B cell (primary cell): ENCODE measurements at regions of chr10 and their contacts with region 1.

Region 1: DNA sequence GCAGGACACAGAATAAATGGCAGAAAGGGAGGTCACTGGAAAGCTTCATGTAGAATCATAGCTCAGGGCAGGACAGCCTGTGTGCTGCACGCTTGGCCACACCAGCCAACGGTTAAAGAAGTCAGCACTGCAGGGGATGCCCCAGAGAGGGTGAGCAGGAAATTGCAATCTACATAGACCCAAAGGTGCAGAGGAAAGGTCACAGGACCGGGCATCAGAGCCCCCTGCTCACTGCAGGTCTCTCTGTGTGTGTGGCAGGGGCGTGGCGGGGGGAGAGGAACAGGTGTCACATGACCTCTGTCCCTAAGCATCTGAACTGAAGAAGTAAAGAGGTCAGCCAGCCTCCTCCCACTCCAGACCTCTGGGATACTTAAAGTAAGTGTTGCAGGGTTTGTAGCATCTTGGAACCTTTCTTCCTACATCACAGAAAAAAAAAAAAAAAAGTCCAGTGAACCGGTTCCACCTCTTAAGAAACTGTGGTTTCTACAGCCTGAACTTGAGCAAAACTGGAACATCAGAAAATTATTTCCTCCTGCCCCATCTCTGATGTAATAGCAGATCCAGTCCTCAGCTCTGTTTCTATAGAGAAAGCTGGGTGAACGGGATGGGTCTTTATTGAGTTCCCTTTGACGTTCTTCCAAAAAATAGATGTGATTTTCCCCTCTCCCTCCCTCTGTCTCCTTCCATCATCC is 64.3 kb downstream of the RGS10 start:
- DNase-seq: peak; percentile 77
- ATAC-seq: peak; percentile 95
- H3K4me3 ChIP-seq: peak overlapping the region in 2 of 5 experiments; percentile 5 to 42
- H3K4me3 Mint-ChIP-seq: peak overlapping the region; percentile 87
- H3K27ac ChIP-seq: peak overlapping the region; percentile 47 to 62
- H3K27ac Mint-ChIP-seq: peak overlapping the region; percentile 81
- H3K4me1 ChIP-seq: peaks cover 27 to 31% of the 10 kb centered on the region in 2 donors
- H3K4me1 Mint-ChIP-seq: peaks cover 37% of the 10 kb centered on the region
- H3K27me3 ChIP-seq: no peaks in the 10 kb centered on the region
- H3K27me3 Mint-ChIP-seq: no peaks in the 10 kb centered on the region
- CTCF ChIP-seq: no peak

Region 2: DNA sequence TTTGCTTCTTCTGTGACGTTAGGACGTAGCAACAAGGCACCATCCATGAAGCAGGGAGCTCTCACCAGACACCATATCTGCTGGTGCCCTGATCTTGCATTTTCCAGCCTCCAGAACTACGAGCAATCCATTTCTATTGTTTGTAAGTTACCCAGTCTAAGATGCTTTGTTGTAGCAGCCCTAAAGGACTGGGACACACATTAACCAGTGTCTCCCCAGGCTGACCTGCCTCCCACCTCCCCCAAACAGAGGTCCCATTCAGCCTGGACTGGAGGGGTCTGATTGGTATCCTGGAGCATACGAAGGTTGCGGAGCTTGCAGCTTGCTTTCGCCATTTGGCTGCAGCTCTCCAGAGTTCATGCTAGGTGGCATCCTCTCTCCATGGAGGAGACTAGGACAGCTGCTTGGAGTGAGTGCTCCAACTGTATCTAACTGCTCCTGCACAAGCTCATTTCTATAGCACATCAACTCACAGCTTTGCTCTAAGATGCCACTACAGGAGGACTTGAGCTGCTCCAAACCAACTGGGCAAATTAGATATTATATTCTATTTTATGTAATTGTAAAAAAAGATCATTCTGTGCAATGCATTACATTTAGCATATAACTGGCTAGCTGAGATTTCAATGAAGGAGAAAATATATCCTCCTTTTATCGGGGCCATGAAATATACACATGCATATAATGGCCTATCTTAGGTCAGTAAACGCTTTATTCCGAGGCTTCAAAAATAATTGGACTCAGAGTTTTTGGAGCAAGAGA is 278.8 kb before region 1 on chr10:
- CTCF ChIA-PET with region 1: interaction called, 10 read pairs
- POLR2A ChIA-PET with region 1: no interaction called
- intact Hi-C with region 1: no loop called
- DNase-seq: peak; percentile 68
- ATAC-seq: peak; percentile 84
- H3K4me3 ChIP-seq: no peak overlapping the region
- H3K4me3 Mint-ChIP-seq: no peak overlapping the region
- H3K27ac ChIP-seq: no peak overlapping the region
- H3K27ac Mint-ChIP-seq: no peak overlapping the region
- H3K4me1 ChIP-seq: peaks cover 0 to 3% of the 10 kb centered on the region in 2 donors
- H3K4me1 Mint-ChIP-seq: peaks cover 4% of the 10 kb centered on the region
- H3K27me3 ChIP-seq: peaks cover 0 to 8% (median 6%) of the 10 kb centered on the region in 4 experiments
- H3K27me3 Mint-ChIP-seq: peaks cover 9% of the 10 kb centered on the region
- CTCF ChIP-seq: peak; percentile 52

Region 3: GRCh38 chr10:119416855-119417254 is 61.4 kb before region 1 on chr10:
- CTCF ChIA-PET with region 1: no interaction called
- POLR2A ChIA-PET with region 1: no interaction called
- intact Hi-C with region 1: no loop called
- DNase-seq: peak; percentile 83
- ATAC-seq: peak; percentile 90
- H3K4me3 ChIP-seq: no peak overlapping the region
- H3K4me3 Mint-ChIP-seq: no peak overlapping the region
- H3K27ac ChIP-seq: no peak overlapping the region
- H3K27ac Mint-ChIP-seq: peak overlapping the region; percentile 62
- H3K4me1 ChIP-seq: peaks cover 0 to 8% of the 10 kb centered on the region in 2 donors
- H3K4me1 Mint-ChIP-seq: peaks cover 6% of the 10 kb centered on the region
- H3K27me3 ChIP-seq: no peaks in the 10 kb centered on the region
- H3K27me3 Mint-ChIP-seq: no peaks in the 10 kb centered on the region
- CTCF ChIP-seq: peak; percentile 88

Region 4: GRCh38 chr10:119461380-119461779 is 16.9 kb before region 1 on chr10:
- CTCF ChIA-PET with region 1: interaction called, 4 read pairs
- POLR2A ChIA-PET with region 1: interaction called, 9 read pairs
- intact Hi-C with region 1: loop called (anchors 2 kb)
- DNase-seq: no peak
- ATAC-seq: peak; percentile 63
- H3K4me3 ChIP-seq: no peak overlapping the region
- H3K4me3 Mint-ChIP-seq: no peak overlapping the region
- H3K27ac ChIP-seq: no peak overlapping the region
- H3K27ac Mint-ChIP-seq: peak overlapping the region; percentile 27
- H3K4me1 ChIP-seq: peaks cover 0 to 20% of the 10 kb centered on the region in 2 donors
- H3K4me1 Mint-ChIP-seq: peaks cover 23% of the 10 kb centered on the region
- H3K27me3 ChIP-seq: peaks cover 0 to 2% (median 0%) of the 10 kb centered on the region in 4 experiments
- H3K27me3 Mint-ChIP-seq: peaks cover 2% of the 10 kb centered on the region
- CTCF ChIP-seq: no peak

Region 5: GRCh38 chr10:119517235-119518141 is 39.2 kb after region 1 on chr10:
- CTCF ChIA-PET with region 1: no interaction called
- POLR2A ChIA-PET with region 1: no interaction called
- intact Hi-C with region 1: no loop called
- DNase-seq: peak; percentile 89
- ATAC-seq: peak; percentile 73
- H3K4me3 ChIP-seq: peak overlapping the region in 3 of 5 experiments; percentile 25 to 51 (median 33)
- H3K4me3 Mint-ChIP-seq: peak overlapping the region; percentile 64
- H3K27ac ChIP-seq: peak overlapping the region; percentile 67 to 95
- H3K27ac Mint-ChIP-seq: peak overlapping the region; percentile 94
- H3K4me1 ChIP-seq: peaks cover 31 to 38% of the 10 kb centered on the region in 2 donors
- H3K4me1 Mint-ChIP-seq: peaks cover 34% of the 10 kb centered on the region
- H3K27me3 ChIP-seq: no peaks in the 10 kb centered on the region
- H3K27me3 Mint-ChIP-seq: no peaks in the 10 kb centered on the region
- CTCF ChIP-seq: no peak